H1 (cell line): ENCODE measurements at regions of chr22 and their contacts with region 1.

Region 1: DNA sequence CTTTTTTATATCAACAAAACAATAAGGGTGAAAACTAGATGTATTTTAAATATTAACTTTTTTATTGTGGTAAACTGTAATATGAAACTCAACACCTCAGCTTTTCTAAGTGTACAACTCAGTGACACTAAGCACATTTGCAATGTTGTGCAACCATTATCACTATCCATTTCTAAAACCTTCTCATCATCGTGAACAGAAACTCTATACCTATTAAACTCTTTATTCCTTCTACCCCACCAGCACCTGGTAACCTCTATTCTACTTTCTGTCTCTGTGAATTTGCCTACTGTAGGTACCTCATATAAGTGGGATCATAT is 9.4 kb downstream of the HORMAD2 start:
- DNase-seq: no peak
- H3K4me3 ChIP-seq: no peak overlapping the region
- H3K27ac ChIP-seq: no peak overlapping the region
- H3K4me1 ChIP-seq: no peaks in the 10 kb centered on the region
- H3K27me3 ChIP-seq: no peaks in the 10 kb centered on the region
- CTCF ChIP-seq: no peak
- EP300 ChIP-seq: no peak
- POLR2A ChIP-seq: no peak
- RAD21 ChIP-seq: no peak

Region 2: GRCh38 chr22:30077279-30077880 is 12.2 kb before region 1 on chr22:
- CTCF ChIA-PET with region 1: interaction called, 14 read pairs
- POLR2A ChIA-PET with region 1: no interaction called
- DNase-seq: no peak
- H3K4me3 ChIP-seq: no peak overlapping the region
- H3K27ac ChIP-seq: no peak overlapping the region
- H3K4me1 ChIP-seq: peaks cover 0 to 5% (median 1%) of the 10 kb centered on the region in 4 experiments; a peak in 3 of 7 replicates
- H3K27me3 ChIP-seq: peaks cover 0 to 5% (median 2%) of the 10 kb centered on the region in 4 experiments; a peak in 2 of 7 replicates
- CTCF ChIP-seq: no peak
- EP300 ChIP-seq: no peak
- POLR2A ChIP-seq: no peak
- RAD21 ChIP-seq: no peak